Ovary (tissue), 10 donors: ENCODE measurements at regions of chr15 and their contacts with region 1.

Region 1: GRCh38 chr15:40893733-40894688 is at the start of gene VPS18:
- DNase-seq: peak; percentile 98 to 100 (median 99)
- H3K4me3 ChIP-seq: peak within 1 kb of the TSS; percentile 64
- H3K27ac ChIP-seq: peak within 1 kb of the TSS; percentile 88
- H3K4me1 ChIP-seq: peaks cover 5% of the 10 kb centered on the region
- H3K27me3 ChIP-seq: no peaks in the 10 kb centered on the region
- CTCF ChIP-seq: peak; percentile 92 to 98 (median 96)
- EP300 ChIP-seq: peak; percentile 31
- POLR2A ChIP-seq: peak; percentile 47
- total RNA-seq, gene VPS18: 12.3 to 26.3 (median 21.8) TPM

Region 2: GRCh38 chr15:40506964-40507571 is 386.9 kb before region 1 on chr15:
- intact Hi-C with region 1: loop called in 1 of 4 experiments (anchors 10 kb)
- DNase-seq: peak; percentile 90 to 93 (median 90)
- H3K4me3 ChIP-seq: peak overlapping the region; percentile 24
- H3K27ac ChIP-seq: peak overlapping the region in 1 of 2 donors; percentile 76
- H3K4me1 ChIP-seq: peaks cover 9% of the 10 kb centered on the region
- H3K27me3 ChIP-seq: no peaks in the 10 kb centered on the region
- CTCF ChIP-seq: peak; percentile 69 to 84 (median 78)
- EP300 ChIP-seq: no peak
- POLR2A ChIP-seq: peak; percentile 17

Region 3: GRCh38 chr15:40525855-40526254 is 368.2 kb before region 1 on chr15:
- intact Hi-C with region 1: loop called in 1 of 4 experiments (anchors 5 kb)
- DNase-seq: no peak
- H3K4me3 ChIP-seq: no peak overlapping the region
- H3K27ac ChIP-seq: no peak overlapping the region
- H3K4me1 ChIP-seq: no peaks in the 10 kb centered on the region
- H3K27me3 ChIP-seq: no peaks in the 10 kb centered on the region
- CTCF ChIP-seq: no peak
- EP300 ChIP-seq: no peak
- POLR2A ChIP-seq: no peak

Region 4: GRCh38 chr15:40582726-40583246 is 311.2 kb before region 1 on chr15:
- intact Hi-C with region 1: loop called in 2 of 4 experiments (anchors 10 kb)
- DNase-seq: no peak
- H3K4me3 ChIP-seq: peak overlapping the region; percentile 1
- H3K27ac ChIP-seq: no peak overlapping the region
- H3K4me1 ChIP-seq: no peaks in the 10 kb centered on the region
- H3K27me3 ChIP-seq: no peaks in the 10 kb centered on the region
- CTCF ChIP-seq: no peak
- EP300 ChIP-seq: no peak
- POLR2A ChIP-seq: no peak

Region 5: GRCh38 chr15:40593588-40594428 is 300.2 kb before region 1 on chr15 and contains the start of gene KNL1:
- intact Hi-C with region 1: loop called in 3 of 4 experiments (anchors 10 kb)
- DNase-seq: peak; percentile 89 to 95 (median 90)
- H3K4me3 ChIP-seq: peak within 1 kb of the TSS; percentile 67
- H3K27ac ChIP-seq: peak within 1 kb of the TSS; percentile 81 to 89
- H3K4me1 ChIP-seq: no peaks in the 10 kb centered on the region
- H3K27me3 ChIP-seq: no peaks in the 10 kb centered on the region
- CTCF ChIP-seq: no peak
- EP300 ChIP-seq: no peak
- POLR2A ChIP-seq: no peak
- total RNA-seq, gene KNL1: 0.13 to 1.4 (median 0.48) TPM

Region 6: DNA sequence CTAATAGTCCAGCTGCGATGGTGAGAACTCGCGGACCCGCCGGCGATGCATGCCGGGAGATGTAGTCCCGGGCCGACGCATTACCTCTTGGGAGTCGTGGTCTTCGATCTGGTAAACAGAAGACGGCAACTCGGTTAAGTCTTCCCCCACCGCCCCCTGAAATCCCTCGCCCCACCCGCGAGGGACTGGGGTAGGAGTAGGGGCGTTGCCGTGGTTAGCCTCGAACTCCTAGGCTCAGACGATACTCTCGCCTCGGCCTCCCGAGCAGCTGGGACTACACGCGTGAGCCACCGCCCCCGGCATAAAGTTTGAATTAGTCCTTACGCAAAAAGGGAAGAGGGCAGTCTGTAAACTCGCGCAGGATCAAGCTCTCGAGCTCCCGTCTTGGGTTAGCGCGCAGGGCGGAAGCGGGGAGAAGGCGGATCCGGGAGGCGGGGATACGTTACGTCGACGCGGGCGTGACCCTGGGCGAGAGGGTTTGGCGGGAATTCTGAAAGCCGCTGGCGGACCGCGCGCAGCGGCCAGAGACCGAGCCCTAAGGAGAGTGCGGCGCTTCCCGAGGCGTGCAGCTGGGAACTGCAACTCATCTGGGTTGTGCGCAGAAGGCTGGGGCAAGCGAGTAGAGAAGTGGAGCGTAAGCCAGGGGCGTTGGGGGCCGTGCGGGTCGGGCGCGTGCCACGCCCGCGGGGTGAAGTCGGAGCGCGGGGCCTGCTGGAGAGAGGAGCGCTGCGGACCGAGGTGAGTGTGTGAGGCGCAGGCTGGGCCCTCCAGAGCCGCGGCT is 199.1 kb before region 1 on chr15 and contains the start of gene RAD51:
- intact Hi-C with region 1: loop called in 1 of 4 experiments (anchors 10 kb)
- DNase-seq: peak; percentile 91 to 95 (median 92)
- H3K4me3 ChIP-seq: peak within 1 kb of the TSS; percentile 90
- H3K27ac ChIP-seq: peak within 1 kb of the TSS; percentile 94 to 99
- H3K4me1 ChIP-seq: peaks cover 8% of the 10 kb centered on the region
- H3K27me3 ChIP-seq: no peaks in the 10 kb centered on the region
- CTCF ChIP-seq: no peak
- EP300 ChIP-seq: no peak
- POLR2A ChIP-seq: peak; percentile 74
- total RNA-seq, gene RAD51: 0.41 to 2.5 (median 0.52) TPM in 4 of 7 donors, not detected in the others

Region 7: DNA sequence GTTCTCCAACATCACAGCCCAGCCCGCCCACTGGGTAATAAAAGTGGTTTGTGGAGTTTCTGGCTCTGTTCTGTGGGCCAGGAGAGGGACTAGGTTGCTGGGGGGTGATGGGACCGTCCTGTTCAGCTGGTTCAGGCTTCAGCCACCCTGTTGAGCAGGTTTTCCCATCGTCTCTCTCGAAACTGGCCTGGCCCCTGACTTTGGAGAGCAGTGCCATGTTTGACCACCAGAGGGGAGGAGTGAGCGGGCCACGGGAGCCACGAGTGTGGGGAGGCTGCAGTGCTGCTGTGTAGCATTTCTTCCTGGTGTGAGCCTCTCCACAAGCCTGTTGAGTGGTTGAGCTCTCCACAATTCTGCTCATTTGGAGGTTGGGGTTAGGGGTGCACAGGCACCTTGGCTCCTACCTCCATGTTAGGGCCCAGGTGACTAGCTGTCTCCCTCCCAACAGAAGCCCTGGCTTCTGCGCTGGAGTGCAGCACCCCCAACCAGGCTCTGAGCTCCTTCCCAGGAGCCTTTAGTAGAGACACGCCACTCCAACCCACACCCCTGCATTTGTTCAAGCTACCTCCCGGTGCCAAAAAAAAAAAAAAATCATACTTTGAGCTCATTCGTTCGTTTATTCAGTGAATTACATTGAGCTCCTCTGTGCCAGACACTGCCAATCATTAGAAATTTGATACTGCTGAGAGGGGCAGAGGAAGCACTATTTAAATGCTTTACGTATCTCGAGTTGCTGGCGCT is 36.2 kb before region 1 on chr15:
- intact Hi-C with region 1: loop called in 1 of 4 experiments (anchors 5 kb)
- DNase-seq: peak; percentile 46 to 79 (median 66)
- H3K4me3 ChIP-seq: no peak overlapping the region
- H3K27ac ChIP-seq: no peak overlapping the region
- H3K4me1 ChIP-seq: no peaks in the 10 kb centered on the region
- H3K27me3 ChIP-seq: no peaks in the 10 kb centered on the region
- CTCF ChIP-seq: peak; percentile 78 to 82 (median 82)
- EP300 ChIP-seq: no peak
- POLR2A ChIP-seq: no peak

Region 8: DNA sequence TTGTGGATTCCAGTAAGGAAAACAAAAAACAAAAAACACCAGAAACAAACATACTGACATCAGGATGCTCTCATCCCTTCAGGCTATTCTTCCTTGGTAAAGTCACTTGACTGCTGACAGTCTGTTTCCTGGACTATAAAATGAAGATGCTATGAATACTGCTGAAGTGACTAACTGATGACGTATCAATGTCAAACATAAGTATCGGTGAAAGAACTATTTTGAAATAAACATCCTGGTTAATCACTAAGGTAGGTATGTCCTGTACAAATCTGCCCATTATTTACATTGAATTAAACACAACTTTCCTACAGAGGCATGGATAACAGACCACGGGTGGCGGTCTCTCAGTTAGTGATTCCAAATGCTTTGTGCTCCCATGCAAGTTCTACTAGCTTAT is 105.2 kb after region 1 on chr15:
- intact Hi-C with region 1: no loop called
- DNase-seq: no peak
- H3K4me3 ChIP-seq: no peak overlapping the region
- H3K27ac ChIP-seq: no peak overlapping the region
- H3K4me1 ChIP-seq: no peaks in the 10 kb centered on the region
- H3K27me3 ChIP-seq: no peaks in the 10 kb centered on the region
- CTCF ChIP-seq: no peak
- EP300 ChIP-seq: no peak
- POLR2A ChIP-seq: no peak